Left ventricle myocardium inferior (tissue), 1 donor: ENCODE measurements at regions of chrX and their contacts with region 1.

Region 1: DNA sequence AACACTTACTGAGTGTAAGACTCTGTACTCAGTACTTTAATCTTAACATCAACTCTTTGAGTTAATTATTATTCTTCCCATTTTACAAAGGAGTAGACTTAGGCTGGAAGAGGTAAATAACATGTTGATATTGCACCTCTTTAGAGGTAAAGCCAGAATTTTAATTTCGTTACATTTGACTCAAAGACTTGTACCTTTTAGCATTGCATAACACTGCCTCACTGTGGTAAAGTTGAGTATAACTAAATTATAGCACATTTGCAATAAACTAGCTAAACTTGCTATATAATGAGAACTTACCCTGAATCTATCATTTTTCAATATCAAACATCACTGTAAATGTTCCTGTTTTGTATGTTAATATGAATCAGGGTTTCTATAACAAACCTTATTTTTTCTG is 218.5 kb downstream of the PRR32 start:
- DNase-seq: no peak
- H3K4me3 ChIP-seq: no peak overlapping the region
- H3K27ac ChIP-seq: no peak overlapping the region
- H3K4me1 ChIP-seq: no peaks in the 10 kb centered on the region
- H3K27me3 ChIP-seq: no peaks in the 10 kb centered on the region
- CTCF ChIP-seq: peak; percentile 49

Region 2: GRCh38 chrX:126770194-126770593 is 267.9 kb before region 1 on chrX:
- intact Hi-C with region 1: loop called (anchors 10 kb)
- DNase-seq: no peak
- H3K4me3 ChIP-seq: no peak overlapping the region
- H3K27ac ChIP-seq: no peak overlapping the region
- H3K4me1 ChIP-seq: no peaks in the 10 kb centered on the region
- H3K27me3 ChIP-seq: no peaks in the 10 kb centered on the region
- CTCF ChIP-seq: peak; percentile 62

Region 3: GRCh38 chrX:127085939-127086338 is 47.9 kb after region 1 on chrX:
- intact Hi-C with region 1: no loop called
- DNase-seq: no peak
- H3K4me3 ChIP-seq: no peak overlapping the region
- H3K27ac ChIP-seq: no peak overlapping the region
- H3K4me1 ChIP-seq: no peaks in the 10 kb centered on the region
- H3K27me3 ChIP-seq: no peaks in the 10 kb centered on the region
- CTCF ChIP-seq: no peak

Region 4: DNA sequence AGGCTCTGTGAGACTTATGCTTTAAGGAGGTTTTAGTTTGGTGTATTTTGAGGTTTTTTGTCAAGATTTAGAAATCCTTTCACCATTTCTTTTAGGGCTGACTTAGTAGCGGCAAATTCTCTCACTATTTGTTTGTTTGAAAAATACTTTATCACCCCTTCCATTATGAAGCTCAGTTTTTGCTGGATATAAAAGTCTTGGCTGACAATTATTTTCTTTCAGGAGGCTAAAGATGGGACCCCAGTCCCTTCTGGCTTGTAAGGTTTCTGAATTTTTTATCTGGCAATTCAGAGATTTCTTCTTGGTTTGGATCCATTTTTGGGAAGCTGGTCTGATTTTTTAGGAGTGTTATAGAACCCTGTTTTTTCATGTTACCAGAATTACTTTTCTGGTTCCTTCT is 925.6 kb after region 1 on chrX:
- intact Hi-C with region 1: no loop called
- DNase-seq: no peak
- H3K4me3 ChIP-seq: no peak overlapping the region
- H3K27ac ChIP-seq: no peak overlapping the region
- H3K4me1 ChIP-seq: no peaks in the 10 kb centered on the region
- H3K27me3 ChIP-seq: no peaks in the 10 kb centered on the region
- CTCF ChIP-seq: no peak